Caco-2 (cell line): ENCODE measurements at regions of chr3 and their contacts with region 1.

Region 1: DNA sequence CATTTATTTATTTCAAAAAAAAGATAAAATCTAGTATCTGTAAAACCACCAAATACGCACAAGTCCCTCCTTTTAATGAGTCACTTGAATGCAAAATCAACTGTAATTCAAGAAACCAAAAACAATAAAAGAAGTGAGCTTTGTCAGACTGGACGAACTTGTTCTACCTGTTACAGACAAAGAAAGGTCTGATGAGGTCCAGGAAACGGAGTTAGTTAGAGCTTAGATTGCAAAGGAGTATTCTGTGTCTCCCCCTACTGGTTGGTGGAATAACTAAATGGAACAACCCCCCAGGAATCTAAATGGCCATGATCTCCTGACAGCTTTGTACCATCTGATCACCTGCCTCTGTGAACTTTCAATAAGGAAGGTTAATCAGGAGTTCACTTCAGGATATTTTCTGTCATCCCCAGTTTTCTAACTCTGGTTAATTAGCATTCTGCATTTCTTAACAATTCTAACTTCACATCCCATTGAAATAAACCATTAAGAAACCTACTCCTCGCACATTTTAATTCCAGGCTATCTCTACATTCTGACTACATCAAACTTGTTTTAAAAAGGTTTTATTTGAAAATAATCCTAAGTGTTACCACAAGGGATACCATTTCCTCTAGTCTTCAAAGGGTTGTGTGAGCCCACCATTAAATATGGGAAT is 333.0 kb upstream of the SATB1 start:
- DNase-seq: peak; percentile 43 to 81
- H3K4me3 ChIP-seq: no peak overlapping the region
- H3K4me3 Mint-ChIP-seq: no peak overlapping the region
- H3K27ac Mint-ChIP-seq: no peak overlapping the region
- H3K4me1 ChIP-seq: peaks cover 7% of the 10 kb centered on the region
- H3K4me1 Mint-ChIP-seq: peaks cover 11% of the 10 kb centered on the region
- H3K27me3 ChIP-seq: no peaks in the 10 kb centered on the region
- H3K27me3 Mint-ChIP-seq: no peaks in the 10 kb centered on the region
- CTCF ChIP-seq: peak; percentile 59 to 70

Region 2: DNA sequence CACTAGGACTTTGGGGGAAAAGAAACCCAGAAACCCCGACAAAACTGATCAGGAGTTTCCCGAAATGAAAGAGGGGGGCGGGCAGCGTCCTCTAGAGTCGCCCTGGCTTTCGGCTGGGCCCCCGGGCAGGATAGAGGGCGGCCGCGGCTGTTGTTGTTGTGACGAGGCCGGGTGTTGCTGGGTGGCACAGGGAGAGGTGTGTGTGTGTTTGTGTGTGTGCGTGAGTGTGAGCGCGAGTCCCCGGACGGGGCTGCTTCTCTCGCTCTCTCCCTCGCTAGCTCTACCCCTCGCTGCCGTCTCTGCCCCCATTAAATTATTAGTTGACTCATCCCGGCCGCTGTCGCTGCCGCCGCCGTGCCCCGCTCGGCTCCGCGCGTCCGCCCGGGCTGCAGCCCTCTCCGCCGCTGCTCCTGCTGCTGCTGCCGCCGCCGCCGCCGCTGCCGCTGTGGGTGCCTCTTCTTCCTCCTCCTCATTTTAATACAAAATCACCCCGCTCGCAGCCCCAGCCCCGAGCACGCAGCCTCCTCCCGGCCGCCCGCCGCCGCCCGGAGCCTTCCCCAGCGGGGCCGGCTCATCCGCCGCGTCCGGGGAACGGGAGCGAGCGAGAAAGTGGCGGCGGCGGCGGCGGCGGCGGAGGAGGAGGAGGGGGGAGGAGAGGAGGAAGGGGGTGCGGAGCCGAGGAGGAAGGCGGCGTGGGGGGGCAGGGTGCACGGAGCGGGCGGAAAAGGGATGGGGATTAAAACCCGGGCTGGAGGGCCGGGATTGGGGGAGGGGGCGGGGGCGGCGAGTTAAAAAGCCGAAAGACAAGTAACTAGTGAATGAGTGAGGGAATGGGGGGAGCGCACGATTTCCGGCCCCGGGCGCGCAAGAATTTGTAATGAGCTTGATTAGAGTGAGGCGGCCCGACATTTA is 333.2 kb before region 1 on chr3 and contains the start of gene SATB1:
- CTCF ChIA-PET with region 1: no interaction called
- POLR2A ChIA-PET with region 1: no interaction called
- intact Hi-C with region 1: loop called (anchors 2 kb)
- DNase-seq: peak; percentile 49 to 54
- H3K4me3 ChIP-seq: peak within 1 kb of the TSS; percentile 72
- H3K4me3 Mint-ChIP-seq: peak within 1 kb of the TSS; percentile 86
- H3K27ac Mint-ChIP-seq: peak within 1 kb of the TSS; percentile 76
- H3K4me1 ChIP-seq: no peaks in the 10 kb centered on the region
- H3K4me1 Mint-ChIP-seq: peaks cover 11% of the 10 kb centered on the region
- H3K27me3 ChIP-seq: no peaks in the 10 kb centered on the region
- H3K27me3 Mint-ChIP-seq: no peaks in the 10 kb centered on the region
- CTCF ChIP-seq: no peak
- total RNA-seq, gene SATB1: 13.8 and 16.4 TPM in 2 replicates

Region 3: DNA sequence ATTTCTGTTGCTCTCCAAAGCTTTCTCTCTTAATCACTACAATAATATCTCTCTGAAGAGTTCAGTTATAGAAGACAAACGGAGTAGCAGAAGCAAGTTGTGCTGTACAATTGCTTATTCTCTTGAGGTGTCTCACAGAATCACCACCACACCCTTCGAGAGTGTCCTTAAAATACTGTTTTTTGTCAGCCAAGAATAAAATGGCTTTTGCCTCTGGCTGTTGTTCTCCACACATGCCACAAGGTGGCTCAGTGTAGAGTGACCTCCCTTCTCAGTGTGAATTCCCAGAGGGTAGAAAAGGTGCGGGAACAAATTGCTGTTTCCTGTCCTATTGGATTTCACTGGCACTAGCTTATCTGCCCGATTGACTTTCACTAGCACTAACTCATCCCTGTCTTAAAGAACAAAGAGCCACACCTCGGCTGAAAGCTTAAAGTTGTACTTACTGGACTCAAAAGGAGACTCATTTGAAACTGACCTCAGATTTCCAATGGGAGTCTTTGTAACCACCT is 198.8 kb before region 1 on chr3:
- CTCF ChIA-PET with region 1: interaction called, 12 read pairs
- POLR2A ChIA-PET with region 1: no interaction called
- intact Hi-C with region 1: loop called (anchors 1 kb)
- DNase-seq: peak; percentile 45 to 48
- H3K4me3 ChIP-seq: no peak overlapping the region
- H3K4me3 Mint-ChIP-seq: no peak overlapping the region
- H3K27ac Mint-ChIP-seq: no peak overlapping the region
- H3K4me1 ChIP-seq: no peaks in the 10 kb centered on the region
- H3K4me1 Mint-ChIP-seq: peaks cover 14% of the 10 kb centered on the region
- H3K27me3 ChIP-seq: no peaks in the 10 kb centered on the region
- H3K27me3 Mint-ChIP-seq: no peaks in the 10 kb centered on the region
- CTCF ChIP-seq: peak; percentile 68 to 72

Region 4: GRCh38 chr3:18635215-18635614 is 123.0 kb before region 1 on chr3:
- CTCF ChIA-PET with region 1: no interaction called
- POLR2A ChIA-PET with region 1: no interaction called
- intact Hi-C with region 1: loop called (anchors 5 kb)
- DNase-seq: peak in 1 of 2 experiments; percentile 10
- H3K4me3 ChIP-seq: no peak overlapping the region
- H3K4me3 Mint-ChIP-seq: no peak overlapping the region
- H3K27ac Mint-ChIP-seq: no peak overlapping the region
- H3K4me1 ChIP-seq: 0 out of 2 replicates have a peak, but pooled peaks cover 10% of the 10 kb centered on the region
- H3K4me1 Mint-ChIP-seq: peaks cover 6% of the 10 kb centered on the region
- H3K27me3 ChIP-seq: no peaks in the 10 kb centered on the region
- H3K27me3 Mint-ChIP-seq: no peaks in the 10 kb centered on the region
- CTCF ChIP-seq: no peak

Region 5: GRCh38 chr3:18687286-18687685 is 70.9 kb before region 1 on chr3:
- CTCF ChIA-PET with region 1: no interaction called
- POLR2A ChIA-PET with region 1: no interaction called
- intact Hi-C with region 1: loop called (anchors 5 kb)
- DNase-seq: no peak
- H3K4me3 ChIP-seq: no peak overlapping the region
- H3K4me3 Mint-ChIP-seq: no peak overlapping the region
- H3K27ac Mint-ChIP-seq: no peak overlapping the region
- H3K4me1 ChIP-seq: no peaks in the 10 kb centered on the region
- H3K4me1 Mint-ChIP-seq: no peaks in the 10 kb centered on the region
- H3K27me3 ChIP-seq: no peaks in the 10 kb centered on the region
- H3K27me3 Mint-ChIP-seq: no peaks in the 10 kb centered on the region
- CTCF ChIP-seq: no peak